ENCODE measurements at regions of chr17 and their contacts with region 1.

Region 1: GRCh38 chr17:46180892-46181274 is 12.3 kb downstream of the KANSL1 start:
- DNase-seq: no peak
- H3K4me3 ChIP-seq: no peak overlapping the region
- H3K4me3 Mint-ChIP-seq: no peak overlapping the region
- H3K27ac ChIP-seq: peak overlapping the region in 1 of 2 donors; percentile 18
- H3K27ac Mint-ChIP-seq: peak overlapping the region in 4 of 7 donors; percentile 72 to 84 (median 80)
- H3K4me1 ChIP-seq: peaks cover 32 to 54% of the 10 kb centered on the region in 2 donors
- H3K4me1 Mint-ChIP-seq: peaks cover 88% of the 10 kb centered on the region
- H3K27me3 ChIP-seq: no peaks in the 10 kb centered on the region
- H3K27me3 Mint-ChIP-seq: no peaks in the 10 kb centered on the region
- CTCF ChIP-seq: no peak

Region 2: GRCh38 chr17:45579529-45580495 is 601.1 kb before region 1 on chr17:
- intact Hi-C with region 1: loop called in 1 of 2 experiments (anchors 5 kb)
- DNase-seq: no peak
- H3K4me3 ChIP-seq: no peak overlapping the region
- H3K4me3 Mint-ChIP-seq: no peak overlapping the region
- H3K27ac ChIP-seq: peak overlapping the region in 1 of 2 donors; percentile 30
- H3K27ac Mint-ChIP-seq: peak overlapping the region in 5 of 7 donors; percentile 9 to 77 (median 35)
- H3K4me1 ChIP-seq: peaks cover 13 to 50% of the 10 kb centered on the region in 2 donors
- H3K4me1 Mint-ChIP-seq: peaks cover 61% of the 10 kb centered on the region
- H3K27me3 ChIP-seq: no peaks in the 10 kb centered on the region
- H3K27me3 Mint-ChIP-seq: peaks cover 0 to 2% (median 0%) of the 10 kb centered on the region in 3 donors
- CTCF ChIP-seq: no peak

Region 3: DNA sequence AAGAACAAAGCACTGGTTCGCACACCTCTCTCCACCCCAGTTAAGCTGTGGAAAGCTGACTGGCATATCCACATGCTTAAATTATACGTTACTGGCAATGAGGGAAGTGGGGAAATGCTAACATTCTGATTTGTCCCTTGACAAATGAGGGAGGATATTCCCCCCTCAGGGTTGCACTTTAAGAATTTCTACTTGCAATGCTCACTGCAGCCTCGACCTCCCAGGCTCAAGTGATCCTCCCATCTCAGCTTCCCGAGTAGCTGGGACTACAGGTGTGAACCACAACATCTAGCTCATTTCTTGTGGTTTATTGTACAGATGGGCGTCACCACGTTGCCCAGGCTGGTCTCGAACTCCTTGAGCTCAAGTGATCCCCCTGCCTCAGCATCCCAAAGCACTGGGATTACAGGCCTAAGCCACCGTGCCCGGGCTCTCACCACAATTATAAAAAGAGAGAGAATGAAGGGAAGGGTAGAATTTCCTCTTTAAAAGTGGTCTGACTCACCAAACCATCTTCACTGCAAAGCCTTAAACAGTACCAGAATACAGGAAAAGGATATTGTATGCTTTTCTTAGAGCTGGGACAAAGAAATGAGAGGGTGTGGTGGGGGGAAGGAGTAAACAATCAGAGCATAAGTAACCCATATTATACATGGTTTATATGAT is 26.6 kb before region 1 on chr17:
- intact Hi-C with region 1: loop called in 1 of 2 experiments (anchors 5 kb)
- DNase-seq: peak in 1 of 3 donors; percentile 4
- H3K4me3 ChIP-seq: no peak overlapping the region
- H3K4me3 Mint-ChIP-seq: peak overlapping the region in 1 of 2 donors; percentile 6
- H3K27ac ChIP-seq: peak overlapping the region in 1 of 2 donors; percentile 39
- H3K27ac Mint-ChIP-seq: peak overlapping the region in 6 of 7 donors; percentile 25 to 76 (median 68)
- H3K4me1 ChIP-seq: peaks cover 17 to 27% of the 10 kb centered on the region in 2 donors
- H3K4me1 Mint-ChIP-seq: peaks cover 63% of the 10 kb centered on the region
- H3K27me3 ChIP-seq: no peaks in the 10 kb centered on the region
- H3K27me3 Mint-ChIP-seq: no peaks in the 10 kb centered on the region
- CTCF ChIP-seq: no peak

Region 4: DNA sequence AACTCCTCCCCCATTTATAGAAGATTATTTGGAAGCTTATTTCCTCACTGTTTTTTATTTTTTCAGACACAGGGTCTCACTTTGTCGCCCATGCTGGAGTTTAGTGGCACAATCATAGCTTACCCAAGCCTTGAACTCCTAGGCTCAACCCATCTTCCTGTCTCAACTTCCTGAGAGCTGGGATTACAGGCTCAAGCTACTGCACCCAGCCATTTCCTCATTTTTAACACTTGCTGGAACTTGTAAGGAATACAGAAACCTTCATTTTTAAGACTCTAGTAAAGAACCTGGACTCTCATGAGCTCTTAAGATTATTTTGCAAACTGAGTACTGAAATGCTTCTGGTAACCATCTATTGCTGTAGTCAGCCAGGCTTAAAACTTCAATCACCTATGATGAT is 17.6 kb before region 1 on chr17:
- intact Hi-C with region 1: loop called in 1 of 2 experiments (anchors 2 kb)
- DNase-seq: peak; percentile 40 to 51 (median 48)
- H3K4me3 ChIP-seq: peak overlapping the region in 1 of 3 experiments; percentile 33
- H3K4me3 Mint-ChIP-seq: peak overlapping the region in 1 of 2 donors; percentile 21
- H3K27ac ChIP-seq: peak overlapping the region in 1 of 2 donors; percentile 65
- H3K27ac Mint-ChIP-seq: peak overlapping the region; percentile 27 to 76 (median 58)
- H3K4me1 ChIP-seq: peaks cover 22 to 26% of the 10 kb centered on the region in 2 donors
- H3K4me1 Mint-ChIP-seq: peaks cover 46% of the 10 kb centered on the region
- H3K27me3 ChIP-seq: no peaks in the 10 kb centered on the region
- H3K27me3 Mint-ChIP-seq: no peaks in the 10 kb centered on the region
- CTCF ChIP-seq: no peak

Measured in CD14-positive monocyte (primary cell).